Activated CD4-positive, alpha-beta T cell treated with anti-CD3 and anti-CD28 coated beads for 36 hours (primary cell): ENCODE measurements at regions of chr10 and their contacts with region 1.

Region 1: GRCh38 chr10:101272229-101272868 is 43.1 kb upstream of the LBX1 start:
- DNase-seq: peak; percentile 78
- ATAC-seq: peak; percentile 91
- H3K4me3 Mint-ChIP-seq: no peak overlapping the region
- H3K27ac Mint-ChIP-seq: no peak overlapping the region
- H3K4me1 Mint-ChIP-seq: peaks cover 2% of the 10 kb centered on the region
- H3K27me3 Mint-ChIP-seq: peaks cover 23% of the 10 kb centered on the region

Region 2: DNA sequence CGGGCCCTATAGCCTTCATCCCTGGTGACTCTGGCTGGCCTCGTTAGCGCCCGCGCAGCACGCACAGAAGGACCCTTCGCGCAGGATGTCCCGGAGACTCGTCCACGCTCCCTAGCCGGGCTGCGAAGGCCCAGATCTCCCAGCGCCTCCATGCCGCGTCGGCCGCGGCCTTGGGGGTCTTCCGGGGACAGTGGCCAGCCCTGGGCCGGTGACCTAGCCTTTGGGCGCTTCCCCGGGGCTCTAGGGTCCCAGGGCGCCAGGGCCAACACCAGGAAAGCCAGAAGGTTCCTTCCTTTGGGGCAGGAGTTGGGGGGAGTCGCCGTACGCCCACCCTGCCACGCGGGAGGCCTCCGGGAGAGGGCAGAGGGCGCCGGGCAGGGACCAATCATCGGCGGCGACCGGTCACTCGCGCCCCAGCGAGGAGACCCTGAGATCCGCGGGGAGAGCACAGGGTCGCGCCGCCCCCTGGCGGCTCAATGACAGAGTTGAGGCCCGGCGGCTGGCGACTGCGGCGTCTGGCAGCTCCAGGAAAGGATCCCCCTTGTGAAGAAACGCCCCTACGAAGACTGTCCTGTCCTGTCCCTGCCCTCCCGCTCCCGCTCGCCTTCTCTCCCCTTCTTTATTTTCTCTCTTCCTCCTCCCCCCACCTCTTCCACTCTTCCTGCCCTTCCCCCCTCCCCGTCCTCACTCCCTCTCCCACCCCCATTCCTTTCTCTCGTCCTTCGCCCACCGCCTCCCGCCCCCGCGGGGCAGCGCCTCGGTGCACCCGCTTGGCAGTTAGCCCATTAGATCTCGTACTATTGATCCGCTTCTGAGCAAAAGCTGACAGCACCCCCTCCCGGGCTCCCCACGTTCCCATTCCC is 19.2 kb after region 1 on chr10:
- CTCF ChIA-PET with region 1: interaction called, 11 read pairs
- POLR2A ChIA-PET with region 1: no interaction called
- intact Hi-C with region 1: no loop called
- DNase-seq: peak; percentile 73
- ATAC-seq: peak; percentile 69
- H3K4me3 Mint-ChIP-seq: peak overlapping the region; percentile 59
- H3K27ac Mint-ChIP-seq: no peak overlapping the region
- H3K4me1 Mint-ChIP-seq: peaks cover 3% of the 10 kb centered on the region
- H3K27me3 Mint-ChIP-seq: peaks cover 66% of the 10 kb centered on the region